CD4-positive, alpha-beta T cell (primary cell): ENCODE measurements at regions of chr22 and their contacts with region 1.

Region 1: DNA sequence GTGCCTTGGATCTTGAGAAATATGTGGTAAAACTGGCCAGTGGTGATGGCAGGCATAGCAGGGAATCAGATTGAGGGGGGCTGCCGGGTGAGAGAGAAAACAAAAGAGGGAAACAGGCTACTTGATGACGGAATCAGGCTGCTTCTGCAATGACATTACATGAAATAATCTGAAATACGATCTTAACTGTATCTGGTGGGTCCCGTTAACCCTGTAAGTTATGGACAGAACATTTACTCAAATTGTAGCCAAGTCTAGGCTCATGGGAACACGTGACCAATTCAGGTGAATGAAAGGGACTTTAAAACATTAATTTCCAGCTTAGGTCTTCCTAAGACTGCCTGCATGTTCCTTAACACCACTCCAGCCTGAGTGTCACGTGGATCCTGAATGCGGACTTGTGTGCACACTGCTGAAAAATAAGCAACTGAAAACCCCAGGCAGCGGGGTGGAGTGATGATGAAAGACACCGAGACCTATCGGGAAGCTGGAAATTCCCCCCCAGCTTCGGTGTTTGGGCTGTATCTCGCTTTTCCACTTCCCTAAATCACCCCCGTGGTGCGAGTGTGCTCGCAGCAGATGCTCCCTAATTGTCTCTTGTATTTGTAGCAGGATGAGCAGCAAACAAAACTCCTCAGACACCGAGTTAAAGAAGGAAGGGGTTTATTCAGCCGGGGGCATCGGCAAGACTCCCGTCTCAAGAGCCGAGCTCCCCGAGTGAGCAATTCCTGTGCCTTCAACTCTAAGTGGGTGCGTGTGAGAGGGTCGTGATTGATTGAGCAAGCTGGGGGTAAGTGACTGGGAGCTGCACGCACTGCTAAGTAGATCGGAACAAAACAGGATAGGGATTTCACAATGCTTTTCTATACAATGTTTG is 145.0 kb upstream of the GRK3 start:
- DNase-seq: peak in 3 of 14 experiments; percentile 12 to 72 (median 68)
- ATAC-seq: no peak
- H3K4me3 ChIP-seq: peak overlapping the region; percentile 30
- H3K4me3 Mint-ChIP-seq: peak overlapping the region; percentile 45
- H3K27ac ChIP-seq: no peak overlapping the region
- H3K27ac Mint-ChIP-seq: no peak overlapping the region
- H3K4me1 ChIP-seq: peaks cover 25% of the 10 kb centered on the region
- H3K4me1 Mint-ChIP-seq: peaks cover 30% of the 10 kb centered on the region
- H3K27me3 ChIP-seq: peaks cover 38 to 41% of the 10 kb centered on the region in 2 experiments
- H3K27me3 Mint-ChIP-seq: peaks cover 73% of the 10 kb centered on the region
- CTCF ChIP-seq: no peak

Region 2: DNA sequence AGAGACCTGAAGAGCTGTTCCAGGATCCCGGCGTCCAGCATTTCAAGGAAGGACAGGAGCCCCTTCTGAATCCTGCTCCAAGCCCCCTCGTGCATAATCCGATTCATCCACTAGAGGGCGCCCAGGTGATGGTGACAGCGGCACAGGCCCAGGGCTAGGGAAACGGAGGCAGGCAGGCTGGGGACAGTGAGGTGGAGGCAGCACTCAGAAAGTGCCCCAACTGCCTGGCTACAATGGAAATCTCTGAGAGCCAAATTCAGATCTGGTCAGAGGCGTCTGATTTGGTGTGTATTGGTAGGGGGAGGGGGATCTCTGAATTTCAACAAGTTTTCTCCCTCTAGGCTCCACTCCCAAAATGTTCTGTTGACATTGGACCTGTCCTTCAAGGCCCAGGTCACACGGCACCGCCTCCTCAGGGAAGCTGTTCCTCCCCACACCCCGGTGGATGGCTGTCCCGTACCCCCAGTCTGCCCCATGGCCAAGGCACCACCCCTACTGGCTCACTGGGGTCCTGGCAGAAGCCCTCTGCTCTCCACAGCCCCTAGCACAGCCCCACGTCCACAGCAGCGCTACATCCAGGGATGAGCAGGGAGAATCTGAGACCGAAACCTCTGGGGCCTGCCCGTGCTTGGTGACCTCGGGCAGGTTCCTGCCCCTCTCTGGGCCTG is 57.1 kb before region 1 on chr22:
- CTCF ChIA-PET with region 1: no interaction called
- POLR2A ChIA-PET with region 1: no interaction called
- intact Hi-C with region 1: no loop called
- DNase-seq: peak; percentile 44 to 77 (median 57)
- ATAC-seq: peak; percentile 49
- H3K4me3 ChIP-seq: no peak overlapping the region
- H3K4me3 Mint-ChIP-seq: no peak overlapping the region
- H3K27ac ChIP-seq: no peak overlapping the region
- H3K27ac Mint-ChIP-seq: no peak overlapping the region
- H3K4me1 ChIP-seq: peaks cover 9% of the 10 kb centered on the region
- H3K4me1 Mint-ChIP-seq: no peaks in the 10 kb centered on the region
- H3K27me3 ChIP-seq: no peaks in the 10 kb centered on the region
- H3K27me3 Mint-ChIP-seq: no peaks in the 10 kb centered on the region
- CTCF ChIP-seq: peak; percentile 96

Region 3: DNA sequence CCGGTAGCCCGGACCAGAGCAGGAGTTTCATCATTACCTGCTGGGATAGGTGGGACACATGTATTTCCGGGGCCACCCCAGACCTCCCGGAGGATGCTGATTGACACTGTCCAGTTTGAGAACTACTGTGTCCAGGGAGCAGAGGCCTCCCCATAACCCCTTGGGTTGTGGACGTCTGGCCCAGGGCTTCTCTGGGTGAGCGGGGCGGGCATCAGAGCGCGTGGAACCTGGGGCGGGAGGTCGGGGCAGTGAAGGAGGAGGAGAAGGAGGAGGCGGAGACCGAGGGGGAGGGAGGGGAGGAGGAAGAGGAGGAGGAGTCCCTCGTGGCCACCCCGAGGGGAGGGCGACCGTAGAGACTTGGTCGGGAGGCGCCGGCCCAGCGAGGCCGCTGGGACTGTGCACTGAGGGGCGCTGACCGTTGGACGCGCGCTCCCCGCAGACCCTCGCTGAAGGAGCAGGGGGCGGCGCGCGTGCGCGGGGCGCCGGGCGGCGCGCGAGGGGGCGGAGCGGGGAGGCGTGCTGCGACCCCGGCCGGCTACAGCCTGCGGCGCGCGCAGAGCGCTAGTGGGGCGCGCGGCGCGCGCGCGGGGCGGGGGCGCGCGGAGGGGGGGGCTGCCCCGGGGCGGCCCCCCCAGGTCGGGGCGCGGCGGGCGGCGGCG is 145.0 kb after region 1 on chr22 and contains the start of gene GRK3:
- CTCF ChIA-PET with region 1: no interaction called
- POLR2A ChIA-PET with region 1: no interaction called
- intact Hi-C with region 1: loop called in 1 of 2 experiments (anchors 5 kb)
- DNase-seq: peak in 13 of 14 experiments; percentile 11 to 72 (median 48)
- ATAC-seq: peak; percentile 66
- H3K4me3 ChIP-seq: peak within 1 kb of the TSS; percentile 59
- H3K4me3 Mint-ChIP-seq: peak within 1 kb of the TSS; percentile 92
- H3K27ac ChIP-seq: peak within 1 kb of the TSS in 1 of 2 donors; percentile 17
- H3K27ac Mint-ChIP-seq: peak within 1 kb of the TSS; percentile 22
- H3K4me1 ChIP-seq: peaks cover 20% of the 10 kb centered on the region
- H3K4me1 Mint-ChIP-seq: peaks cover 41% of the 10 kb centered on the region
- H3K27me3 ChIP-seq: peaks cover 0 to 2% of the 10 kb centered on the region in 2 experiments
- H3K27me3 Mint-ChIP-seq: peaks cover 7% of the 10 kb centered on the region
- CTCF ChIP-seq: no peak
- total RNA-seq, gene GRK3: 1.7 to 2.0 TPM